CD8-positive, alpha-beta memory T cell (primary cell): ENCODE measurements at regions of chr17 and their contacts with region 1.

Region 1: GRCh38 chr17:74736513-74737298 is at the start of gene RAB37:
- DNase-seq: peak; percentile 38 to 70 (median 52)
- H3K4me3 ChIP-seq: peak within 1 kb of the TSS; percentile 98
- H3K4me3 Mint-ChIP-seq: peak within 1 kb of the TSS; percentile 91 to 99 (median 97)
- H3K27ac ChIP-seq: peak within 1 kb of the TSS; percentile 63
- H3K27ac Mint-ChIP-seq: peak within 1 kb of the TSS; percentile 80 to 95 (median 91)
- H3K4me1 ChIP-seq: peaks cover 58% of the 10 kb centered on the region
- H3K4me1 Mint-ChIP-seq: peaks cover 42 to 49% (median 48%) of the 10 kb centered on the region in 3 donors
- H3K27me3 ChIP-seq: no peaks in the 10 kb centered on the region
- H3K27me3 Mint-ChIP-seq: no peaks in the 10 kb centered on the region
- total RNA-seq, gene RAB37: 5.8 to 6.0 TPM

Region 2: DNA sequence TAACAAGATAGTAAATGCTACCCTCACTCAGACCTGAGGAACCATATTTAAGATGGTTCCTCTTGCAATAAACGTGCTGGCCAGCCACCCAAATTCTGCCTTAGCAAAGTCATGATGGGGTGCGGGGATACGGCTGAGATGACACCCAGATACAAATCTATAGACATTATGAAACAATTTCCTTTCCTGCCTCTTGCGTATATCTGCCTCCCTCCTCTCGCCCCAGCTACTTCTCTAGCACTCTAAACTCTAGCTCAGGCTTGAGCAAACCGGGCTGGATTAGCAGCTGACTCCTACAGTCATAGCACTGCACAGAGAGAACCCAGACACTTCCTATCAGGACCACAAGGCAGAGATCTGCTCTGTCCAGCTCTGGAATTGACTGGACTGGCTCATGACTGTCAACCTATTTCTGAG is 46.3 kb before region 1 on chr17:
- CTCF ChIA-PET with region 1: interaction called, 14 read pairs
- POLR2A ChIA-PET with region 1: interaction called, 8 read pairs
- DNase-seq: no peak
- H3K4me3 ChIP-seq: no peak overlapping the region
- H3K4me3 Mint-ChIP-seq: no peak overlapping the region
- H3K27ac ChIP-seq: no peak overlapping the region
- H3K27ac Mint-ChIP-seq: no peak overlapping the region
- H3K4me1 ChIP-seq: no peaks in the 10 kb centered on the region
- H3K4me1 Mint-ChIP-seq: no peaks in the 10 kb centered on the region
- H3K27me3 ChIP-seq: no peaks in the 10 kb centered on the region
- H3K27me3 Mint-ChIP-seq: peaks cover 7 to 18% of the 10 kb centered on the region in 2 donors

Region 3: DNA sequence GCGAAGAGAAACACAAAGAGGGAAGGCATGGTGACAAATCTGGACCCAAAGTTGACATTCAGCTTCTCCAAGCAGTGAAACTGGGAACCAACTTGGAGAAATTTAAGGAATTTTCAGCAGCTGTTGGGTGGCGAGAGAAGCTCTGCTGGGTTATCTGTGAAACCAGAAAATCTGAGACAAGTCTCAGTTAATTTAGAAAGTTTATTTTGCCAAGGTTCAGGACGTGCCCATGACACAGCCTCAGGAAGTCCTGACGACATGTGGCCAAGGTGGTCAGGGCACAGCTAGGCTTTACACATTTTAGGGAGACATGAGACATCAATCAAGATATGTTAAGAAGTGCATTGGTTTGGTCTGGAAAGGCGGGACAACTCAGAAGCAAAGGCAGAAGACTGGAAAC is 12.8 kb before region 1 on chr17:
- CTCF ChIA-PET with region 1: interaction called, 14 read pairs
- POLR2A ChIA-PET with region 1: no interaction called
- DNase-seq: no peak
- H3K4me3 ChIP-seq: no peak overlapping the region
- H3K4me3 Mint-ChIP-seq: no peak overlapping the region
- H3K27ac ChIP-seq: no peak overlapping the region
- H3K27ac Mint-ChIP-seq: no peak overlapping the region
- H3K4me1 ChIP-seq: no peaks in the 10 kb centered on the region
- H3K4me1 Mint-ChIP-seq: no peaks in the 10 kb centered on the region
- H3K27me3 ChIP-seq: no peaks in the 10 kb centered on the region
- H3K27me3 Mint-ChIP-seq: peaks cover 0 to 7% of the 10 kb centered on the region in 2 donors

Region 4: DNA sequence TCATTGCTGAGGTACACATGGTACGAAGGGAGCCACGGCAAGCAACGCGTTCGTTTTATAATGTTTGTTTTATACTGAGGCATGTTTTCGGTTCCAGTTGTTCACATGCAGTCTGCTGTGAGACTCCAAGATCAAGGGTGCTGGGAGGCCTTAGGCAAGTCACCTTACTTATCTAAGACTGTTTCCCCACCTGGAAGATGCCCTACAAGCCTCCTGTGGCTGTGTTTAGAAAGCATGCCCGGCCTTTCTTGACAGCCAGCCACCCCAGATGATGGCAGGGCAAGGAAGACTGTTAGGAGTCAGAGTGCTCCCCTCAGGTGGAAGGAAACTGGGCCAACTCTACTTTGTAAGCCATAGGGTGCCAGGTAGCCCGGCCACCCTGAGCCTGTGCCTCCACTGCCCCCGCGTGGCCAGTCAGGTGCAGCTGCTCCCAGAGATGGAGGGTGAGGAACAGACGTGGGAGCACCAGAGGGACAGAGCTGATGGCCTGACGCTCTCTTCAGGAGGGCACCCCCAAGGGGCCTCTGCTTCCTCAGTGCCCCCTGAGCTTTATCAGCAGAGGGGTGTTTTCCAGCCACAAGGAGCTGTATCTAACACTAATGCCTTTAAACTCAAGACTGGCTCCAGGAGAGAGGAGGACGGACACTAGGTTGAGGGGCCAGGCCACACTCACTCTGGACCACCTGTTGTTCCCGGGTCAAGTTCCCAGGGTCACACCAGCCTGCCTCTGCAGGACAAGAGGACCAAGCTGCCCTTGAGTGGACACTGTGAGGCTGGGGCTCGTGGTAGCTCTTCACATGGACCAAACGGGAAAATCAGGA is 34.0 kb after region 1 on chr17:
- CTCF ChIA-PET with region 1: interaction called, 33 read pairs
- POLR2A ChIA-PET with region 1: interaction called, 7 read pairs
- DNase-seq: peak; percentile 65 to 86 (median 73)
- H3K4me3 ChIP-seq: no peak overlapping the region
- H3K4me3 Mint-ChIP-seq: peak overlapping the region in 2 of 7 donors; percentile 36 to 83
- H3K27ac ChIP-seq: no peak overlapping the region
- H3K27ac Mint-ChIP-seq: peak overlapping the region; percentile 65 to 99 (median 82)
- H3K4me1 ChIP-seq: peaks cover 27% of the 10 kb centered on the region
- H3K4me1 Mint-ChIP-seq: peaks cover 38 to 61% (median 54%) of the 10 kb centered on the region in 3 donors
- H3K27me3 ChIP-seq: no peaks in the 10 kb centered on the region
- H3K27me3 Mint-ChIP-seq: peaks cover 0 to 2% of the 10 kb centered on the region in 2 donors

Region 5: GRCh38 chr17:74790161-74791054 is 53.7 kb after region 1 on chr17:
- CTCF ChIA-PET with region 1: interaction called, 12 read pairs
- POLR2A ChIA-PET with region 1: no interaction called
- DNase-seq: no peak
- H3K4me3 ChIP-seq: peak overlapping the region; percentile 8
- H3K4me3 Mint-ChIP-seq: peak overlapping the region in 1 of 7 donors; percentile 15
- H3K27ac ChIP-seq: no peak overlapping the region
- H3K27ac Mint-ChIP-seq: peak overlapping the region in 4 of 8 donors; percentile 4 to 52 (median 13)
- H3K4me1 ChIP-seq: peaks cover 37% of the 10 kb centered on the region
- H3K4me1 Mint-ChIP-seq: peaks cover 18 to 26% (median 18%) of the 10 kb centered on the region in 3 donors
- H3K27me3 ChIP-seq: no peaks in the 10 kb centered on the region
- H3K27me3 Mint-ChIP-seq: no peaks in the 10 kb centered on the region